Dendritic cell treated with granulocyte-macrophage colony-stimulating factor and Interleukin-4, amounts not matched to agents 40 ng/mL and 50 ng/mL, for 4 days (primary cell): ENCODE measurements at regions of chr18 and their contacts with region 1.

Region 1: GRCh38 chr18:20971886-20972267 is 139.7 kb downstream of the ROCK1 start:
- H3K4me3 Mint-ChIP-seq: no peak overlapping the region
- H3K27ac Mint-ChIP-seq: no peak overlapping the region
- H3K4me1 Mint-ChIP-seq: peaks cover 6% of the 10 kb centered on the region
- H3K27me3 Mint-ChIP-seq: no peaks in the 10 kb centered on the region

Region 2: DNA sequence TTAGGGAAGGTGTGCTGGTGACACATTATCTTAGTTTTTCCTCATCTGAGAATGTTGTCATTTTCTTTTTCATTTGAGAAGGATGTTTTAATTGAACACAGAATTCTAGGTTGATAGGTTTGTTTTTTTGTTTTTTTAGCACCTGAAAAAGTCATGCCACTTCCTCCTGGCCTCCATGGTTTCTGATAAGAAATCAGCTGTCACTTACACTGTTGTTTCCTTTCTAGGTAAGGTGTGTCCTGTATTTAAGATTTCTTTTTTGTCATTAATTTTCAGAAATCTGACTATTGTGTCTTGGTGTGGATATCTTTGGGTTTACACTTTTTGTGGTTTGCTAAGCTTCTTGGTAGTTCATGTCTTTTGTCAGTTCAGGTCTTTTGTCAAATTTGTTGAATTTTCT is 40.4 kb after region 1 on chr18:
- intact Hi-C with region 1: no loop called
- H3K4me3 Mint-ChIP-seq: no peak overlapping the region
- H3K27ac Mint-ChIP-seq: no peak overlapping the region
- H3K4me1 Mint-ChIP-seq: no peaks in the 10 kb centered on the region
- H3K27me3 Mint-ChIP-seq: no peaks in the 10 kb centered on the region

Region 3: GRCh38 chr18:21053127-21053526 is 81.2 kb after region 1 on chr18:
- intact Hi-C with region 1: no loop called
- H3K4me3 Mint-ChIP-seq: no peak overlapping the region
- H3K27ac Mint-ChIP-seq: no peak overlapping the region
- H3K4me1 Mint-ChIP-seq: peaks cover 17% of the 10 kb centered on the region
- H3K27me3 Mint-ChIP-seq: no peaks in the 10 kb centered on the region

Region 4: GRCh38 chr18:21538230-21538629 is 566.4 kb after region 1 on chr18:
- intact Hi-C with region 1: loop called (anchors 10 kb)
- H3K4me3 Mint-ChIP-seq: no peak overlapping the region
- H3K27ac Mint-ChIP-seq: no peak overlapping the region
- H3K4me1 Mint-ChIP-seq: no peaks in the 10 kb centered on the region
- H3K27me3 Mint-ChIP-seq: no peaks in the 10 kb centered on the region